Activated CD8-positive, alpha-beta memory T cell treated with anti-CD3 and anti-CD28 coated beads, Interleukin-2, amount 10 ng/mL, durations not matched to agents 7 days and 5 days (primary cell): ENCODE measurements at regions of chr3 and their contacts with region 1.

Region 1: DNA sequence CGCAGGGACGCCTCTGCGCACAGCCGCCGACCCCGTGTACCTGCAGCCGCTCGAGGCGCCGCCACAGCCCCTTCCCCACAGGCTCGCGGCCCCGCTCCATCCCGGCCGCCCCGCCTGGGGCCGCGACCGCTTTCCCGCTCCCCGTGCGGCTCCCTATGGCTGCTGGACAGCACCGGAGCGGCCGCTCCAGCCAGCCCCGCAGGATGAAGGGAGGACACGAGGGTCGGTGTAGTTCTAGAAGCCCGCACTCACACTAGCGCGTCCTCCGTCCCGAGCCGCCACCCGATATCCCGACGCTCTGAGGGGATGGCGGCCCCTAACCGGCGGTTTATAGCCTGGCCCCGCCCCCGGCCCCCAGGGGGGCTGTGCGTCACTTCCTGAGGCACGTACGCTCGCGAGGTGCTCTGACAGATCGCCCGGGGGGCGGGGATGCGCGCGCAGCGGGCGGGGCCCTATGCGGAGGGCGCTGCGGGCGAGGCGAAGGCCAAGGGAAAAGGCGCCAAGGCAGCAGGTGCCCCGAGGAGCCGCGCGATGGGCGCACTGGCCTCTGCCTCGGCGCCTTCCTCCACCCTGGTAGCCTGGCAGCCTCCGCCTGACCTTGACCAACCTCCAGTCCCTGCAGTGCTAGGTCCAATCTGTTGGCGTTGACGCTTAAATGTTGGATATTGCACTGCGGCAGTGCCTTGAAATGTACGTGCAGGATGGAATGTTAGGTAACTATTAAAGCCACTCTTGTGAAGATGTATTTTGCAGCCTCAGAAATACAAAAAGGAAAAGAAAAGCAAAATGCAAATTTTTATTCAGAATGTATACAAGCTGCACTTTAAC is at the start of gene TFRC:
- DNase-seq: peak; percentile 96
- ATAC-seq: peak; percentile 87
- H3K4me3 Mint-ChIP-seq: peak within 1 kb of the TSS; percentile 100
- H3K27ac Mint-ChIP-seq: peak within 1 kb of the TSS; percentile 97
- H3K4me1 Mint-ChIP-seq: peaks cover 38% of the 10 kb centered on the region
- H3K27me3 Mint-ChIP-seq: no peaks in the 10 kb centered on the region
- total RNA-seq, gene TFRC: 409 to 782 TPM

Region 2: GRCh38 chr3:196186651-196187573 is 104.9 kb after region 1 on chr3:
- CTCF ChIA-PET with region 1: interaction called, 238 read pairs
- DNase-seq: peak; percentile 75
- ATAC-seq: peak; percentile 30
- H3K4me3 Mint-ChIP-seq: peak overlapping the region; percentile 63
- H3K27ac Mint-ChIP-seq: peak overlapping the region; percentile 93
- H3K4me1 Mint-ChIP-seq: peaks cover 55% of the 10 kb centered on the region
- H3K27me3 Mint-ChIP-seq: no peaks in the 10 kb centered on the region